ENCODE measurements at regions of chr7 and their contacts with region 1.

Region 1: GRCh38 chr7:41592236-41592635 is 110.7 kb downstream of the INHBA start:
- DNase-seq: no peak
- ATAC-seq: no peak

Region 2: GRCh38 chr7:41529831-41530230 is 62.4 kb before region 1 on chr7:
- intact Hi-C with region 1: loop called (anchors 5 kb)
- DNase-seq: no peak
- ATAC-seq: no peak

Region 3: DNA sequence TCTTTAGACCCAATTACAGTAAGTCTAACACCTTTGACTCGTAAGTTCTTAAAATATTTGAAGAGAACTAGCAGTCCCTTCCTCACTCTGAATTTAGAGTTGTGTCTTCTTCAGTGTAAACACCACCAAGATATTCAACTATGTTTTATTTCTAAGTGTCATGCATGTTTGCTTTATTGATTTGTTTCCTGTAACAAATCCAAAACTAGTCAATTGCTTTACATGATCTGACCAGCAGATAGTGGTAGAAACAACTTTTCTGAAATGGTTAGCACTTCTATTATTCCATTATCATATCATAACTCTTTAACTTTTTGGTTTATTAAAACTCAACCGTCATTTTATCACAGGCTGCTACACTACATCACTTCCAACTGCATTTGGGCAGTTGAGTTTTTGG is 20.6 kb after region 1 on chr7:
- intact Hi-C with region 1: no loop called
- DNase-seq: no peak
- ATAC-seq: no peak

Measured in Right ventricle myocardium superior (tissue), 1 donor.